Activated CD4-positive, alpha-beta memory T cell treated with anti-CD3 and anti-CD28 coated beads for 36 hours (primary cell): ENCODE measurements at regions of chr5 and their contacts with region 1.

Region 1: GRCh38 chr5:110757118-110757729 is 18.4 kb downstream of the SLC25A46 start:
- DNase-seq: no peak
- H3K4me3 Mint-ChIP-seq: no peak overlapping the region
- H3K27ac Mint-ChIP-seq: no peak overlapping the region
- H3K4me1 Mint-ChIP-seq: peaks cover 27% of the 10 kb centered on the region
- H3K27me3 Mint-ChIP-seq: no peaks in the 10 kb centered on the region

Region 2: GRCh38 chr5:110738812-110739651 is 18.2 kb before region 1 on chr5 and contains the start of gene SLC25A46:
- CTCF ChIA-PET with region 1: interaction called, 11 read pairs
- POLR2A ChIA-PET with region 1: interaction called, 4 read pairs
- intact Hi-C with region 1: loop called (anchors 1 kb)
- DNase-seq: peak; percentile 93
- H3K4me3 Mint-ChIP-seq: peak within 1 kb of the TSS; percentile 91
- H3K27ac Mint-ChIP-seq: peak within 1 kb of the TSS; percentile 84
- H3K4me1 Mint-ChIP-seq: peaks cover 34% of the 10 kb centered on the region
- H3K27me3 Mint-ChIP-seq: peaks cover 5% of the 10 kb centered on the region
- total RNA-seq, gene SLC25A46: 35.4 to 37.6 TPM

Region 3: DNA sequence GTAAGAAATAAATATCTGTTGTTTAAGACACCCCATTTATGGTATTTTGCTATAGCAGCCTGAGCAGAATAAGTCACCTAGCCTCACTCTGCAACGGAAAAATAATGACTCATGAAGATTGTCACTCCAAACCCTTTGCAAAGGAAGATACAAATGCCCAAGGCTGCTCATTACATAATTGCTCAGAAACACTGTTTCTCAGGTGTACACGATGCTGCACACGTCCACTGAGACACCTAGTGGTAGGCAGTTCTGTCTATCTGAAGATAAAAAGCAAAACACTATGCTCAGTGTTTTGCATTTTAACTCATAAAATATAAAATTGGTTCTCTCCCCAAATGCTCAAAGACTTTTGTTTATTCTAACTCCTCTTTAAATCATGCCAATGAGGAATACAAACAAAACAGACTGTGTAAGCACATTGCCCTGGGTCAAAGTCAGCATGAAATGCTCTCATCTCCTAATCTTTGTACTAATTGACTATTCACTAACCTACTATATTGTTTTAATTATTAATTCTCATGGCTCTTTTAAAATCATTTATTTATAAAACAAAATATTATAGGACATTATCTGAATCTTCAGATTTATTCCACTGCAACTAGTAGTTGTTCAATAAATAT is 306.6 kb after region 1 on chr5:
- CTCF ChIA-PET with region 1: interaction called, 3 read pairs
- POLR2A ChIA-PET with region 1: no interaction called
- intact Hi-C with region 1: loop called (anchors 2 kb)
- DNase-seq: no peak
- H3K4me3 Mint-ChIP-seq: no peak overlapping the region
- H3K27ac Mint-ChIP-seq: no peak overlapping the region
- H3K4me1 Mint-ChIP-seq: no peaks in the 10 kb centered on the region
- H3K27me3 Mint-ChIP-seq: peaks cover 23% of the 10 kb centered on the region

Region 4: GRCh38 chr5:111092062-111092853 is 335.0 kb after region 1 on chr5 and contains the start of gene WDR36:
- CTCF ChIA-PET with region 1: interaction called, 3 read pairs
- POLR2A ChIA-PET with region 1: no interaction called
- intact Hi-C with region 1: loop called (anchors 1 kb)
- DNase-seq: peak; percentile 93
- H3K4me3 Mint-ChIP-seq: peak within 1 kb of the TSS; percentile 92
- H3K27ac Mint-ChIP-seq: peak within 1 kb of the TSS; percentile 94
- H3K4me1 Mint-ChIP-seq: peaks cover 38% of the 10 kb centered on the region
- H3K27me3 Mint-ChIP-seq: peaks cover 3% of the 10 kb centered on the region
- total RNA-seq, gene WDR36: 43.5 to 44.1 TPM

Region 5: DNA sequence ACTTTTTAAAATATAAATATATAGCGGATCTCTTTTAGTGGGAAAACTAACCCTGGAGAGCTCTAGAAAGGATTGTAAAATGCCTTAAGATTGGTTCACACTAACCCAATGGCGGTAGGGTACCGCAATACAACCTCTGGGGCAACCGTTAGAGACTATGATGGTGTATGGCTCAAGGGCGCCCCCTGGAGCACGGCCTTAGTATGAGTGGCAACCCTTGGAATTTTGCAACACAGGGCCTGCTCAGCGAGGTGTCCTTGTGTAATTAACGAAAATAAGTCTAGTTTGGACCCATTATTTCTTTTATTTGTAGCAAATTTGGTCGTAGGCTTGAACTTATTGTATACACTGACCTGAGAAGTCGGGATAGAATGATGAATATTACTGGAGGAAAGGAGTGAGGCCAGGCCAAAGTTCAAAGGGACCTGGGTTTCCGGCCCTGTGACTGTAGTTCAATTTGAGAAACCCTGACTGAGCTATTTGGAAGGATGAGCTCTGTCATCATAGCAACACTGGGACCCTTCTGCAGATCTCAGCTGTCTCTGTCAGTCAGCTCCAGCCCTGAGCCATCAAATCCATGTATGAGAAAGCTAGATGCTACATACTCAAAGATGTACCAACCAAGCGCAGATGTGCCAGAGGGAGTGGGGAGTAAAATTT is 521.8 kb after region 1 on chr5:
- CTCF ChIA-PET with region 1: interaction called, 4 read pairs
- POLR2A ChIA-PET with region 1: no interaction called
- intact Hi-C with region 1: loop called (anchors 1 kb)
- DNase-seq: peak; percentile 92
- H3K4me3 Mint-ChIP-seq: no peak overlapping the region
- H3K27ac Mint-ChIP-seq: no peak overlapping the region
- H3K4me1 Mint-ChIP-seq: peaks cover 60% of the 10 kb centered on the region
- H3K27me3 Mint-ChIP-seq: no peaks in the 10 kb centered on the region

Region 6: GRCh38 chr5:112146323-112147226 is 1389.4 kb after region 1 on chr5:
- CTCF ChIA-PET with region 1: interaction called, 3 read pairs
- POLR2A ChIA-PET with region 1: no interaction called
- intact Hi-C with region 1: loop called (anchors 2 kb)
- DNase-seq: peak; percentile 64
- H3K4me3 Mint-ChIP-seq: no peak overlapping the region
- H3K27ac Mint-ChIP-seq: peak overlapping the region; percentile 45
- H3K4me1 Mint-ChIP-seq: no peaks in the 10 kb centered on the region
- H3K27me3 Mint-ChIP-seq: peaks cover 9% of the 10 kb centered on the region